Lower leg skin (tissue), 4 donors: ENCODE measurements at regions of chr10 and their contacts with region 1.

Region 1: DNA sequence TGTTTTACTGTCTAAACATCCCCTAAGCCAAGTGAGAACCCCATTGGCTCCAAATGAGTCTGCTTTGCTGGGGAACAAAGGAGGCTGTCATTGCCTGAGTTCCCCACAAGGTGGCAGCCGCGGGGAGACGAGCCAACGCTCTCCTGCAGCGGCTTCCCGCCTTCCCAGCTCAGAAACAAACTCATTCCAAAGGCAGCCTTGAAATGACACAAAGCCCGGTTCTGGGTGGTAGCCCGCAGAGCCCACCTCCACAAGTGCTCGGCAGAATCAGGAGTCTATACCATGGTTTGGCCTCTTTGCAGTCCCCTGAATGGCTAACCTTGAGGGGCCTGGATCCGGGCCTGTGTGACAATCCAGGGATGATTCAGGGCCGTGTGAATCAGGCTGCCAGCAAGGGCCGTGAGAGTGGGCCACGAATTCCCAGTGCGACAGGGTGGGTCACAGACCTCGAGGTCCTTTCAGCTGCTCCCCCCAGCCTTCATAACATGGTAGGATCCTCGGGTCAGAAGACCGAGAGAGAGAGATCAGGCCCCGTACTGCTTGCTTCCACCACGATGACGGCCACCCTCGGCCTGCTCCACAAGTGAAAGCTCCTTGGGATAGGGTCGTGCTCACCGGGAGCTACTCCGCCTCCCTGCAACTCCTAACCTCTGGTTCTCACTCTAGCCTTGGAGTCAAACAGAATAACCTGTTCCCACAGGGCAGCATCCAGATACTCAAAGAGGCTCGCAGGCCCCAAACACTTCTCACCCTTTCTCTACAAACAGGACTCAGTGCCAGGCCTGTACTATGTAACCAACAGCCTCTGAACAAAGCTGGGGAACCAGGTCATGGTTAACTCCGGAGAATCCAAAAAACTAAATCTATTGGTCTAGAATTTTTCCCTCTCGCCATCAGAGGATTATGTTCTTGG is 79.6 kb downstream of the DLG5 start:
- DNase-seq: peak; percentile 72 to 94
- H3K4me3 ChIP-seq: no peak overlapping the region
- CTCF ChIP-seq: peak in 1 of 3 donors; percentile 78
- POLR2A ChIP-seq: no peak

Region 2: DNA sequence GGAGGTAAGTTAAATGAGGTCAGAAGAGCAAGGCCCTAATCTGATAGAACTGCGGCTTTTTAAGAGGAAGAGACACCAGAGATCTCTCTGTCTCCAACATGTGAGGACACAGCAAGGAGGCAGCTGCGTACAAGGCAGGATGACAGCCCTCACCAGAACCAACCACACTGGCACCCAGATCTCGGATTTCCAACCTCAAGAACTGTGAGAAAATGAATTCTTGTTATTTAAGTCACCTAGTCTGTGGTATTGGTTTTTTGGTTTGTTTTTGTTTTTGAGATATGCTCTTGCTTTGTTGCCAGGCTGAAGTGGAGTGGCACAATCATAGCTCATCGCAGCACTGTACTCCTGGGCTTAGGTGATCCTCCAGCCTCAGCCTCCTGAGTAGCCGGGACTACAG is 47.6 kb before region 1 on chr10:
- intact Hi-C with region 1: no loop called
- DNase-seq: no peak
- H3K4me3 ChIP-seq: no peak overlapping the region
- CTCF ChIP-seq: no peak
- POLR2A ChIP-seq: no peak

Region 3: DNA sequence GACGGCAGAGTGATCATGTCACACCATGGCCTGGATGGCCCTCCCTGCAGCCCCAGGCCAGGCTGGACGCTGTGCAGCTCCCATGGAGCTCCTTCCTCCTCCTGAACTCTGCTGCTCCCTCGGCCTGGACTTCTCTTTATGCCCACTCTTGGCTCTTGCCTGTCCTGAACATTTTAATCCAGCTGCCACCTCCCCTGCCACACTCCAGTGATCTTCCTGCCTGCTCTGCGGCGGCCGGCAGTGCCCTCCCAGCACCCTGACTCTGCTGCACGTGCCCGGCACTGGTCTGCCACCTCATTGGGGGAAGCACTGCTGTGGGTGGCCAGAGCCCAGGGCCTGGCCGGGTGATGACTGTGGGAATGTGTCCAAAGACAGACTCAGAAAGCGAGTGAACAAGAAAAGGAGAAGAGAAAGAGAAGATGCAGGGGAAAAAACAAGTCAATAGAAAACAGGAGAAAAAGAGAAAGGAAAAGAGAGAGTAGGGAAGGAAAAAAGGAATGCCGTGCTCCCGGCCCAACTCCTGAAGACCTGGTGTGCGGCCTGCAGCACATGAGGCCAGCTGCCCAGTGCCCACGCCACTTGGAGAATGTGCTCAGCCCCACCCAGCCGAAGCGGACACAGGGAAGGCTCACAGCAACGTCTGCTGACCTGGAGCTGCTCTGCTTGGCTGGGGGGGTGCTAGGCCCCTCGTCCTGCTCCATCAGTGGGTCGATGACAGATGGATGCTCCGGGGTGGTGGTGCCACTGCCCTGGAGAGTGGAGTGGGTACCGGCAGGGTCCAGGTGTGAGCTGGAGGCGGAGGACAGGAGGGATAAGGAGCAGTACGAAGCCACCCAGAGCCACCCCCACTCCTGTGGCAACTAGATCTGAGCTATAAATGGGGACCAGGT is 36.3 kb before region 1 on chr10:
- intact Hi-C with region 1: no loop called
- DNase-seq: no peak
- H3K4me3 ChIP-seq: no peak overlapping the region
- CTCF ChIP-seq: no peak
- POLR2A ChIP-seq: no peak

Region 4: DNA sequence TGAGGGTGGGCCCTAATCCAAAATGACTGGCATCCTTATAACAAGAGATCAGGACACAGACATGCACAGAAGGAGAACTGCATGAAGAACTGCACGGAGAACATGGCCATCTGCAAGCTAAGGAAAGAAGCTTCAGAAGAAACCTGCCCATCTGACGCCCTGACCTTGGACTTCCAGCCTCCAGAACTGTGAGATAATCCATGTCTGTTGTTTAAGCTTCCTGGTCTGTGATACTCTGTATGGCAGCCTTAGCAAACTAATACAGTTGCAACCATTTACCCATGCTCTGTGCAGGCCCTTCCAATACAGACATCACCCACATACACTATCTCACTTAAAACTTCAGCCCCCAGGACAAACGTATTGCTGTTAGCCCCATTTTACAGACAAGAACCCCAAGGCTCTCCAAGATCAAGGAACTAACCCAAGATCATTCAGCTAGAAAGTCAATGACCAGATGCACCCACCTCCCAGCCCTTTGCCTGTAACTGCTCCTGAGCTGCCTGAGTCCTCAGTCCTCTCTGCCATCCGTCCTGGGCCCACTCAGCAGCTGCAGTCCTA is 39.9 kb after region 1 on chr10:
- intact Hi-C with region 1: loop called (anchors 1 kb)
- DNase-seq: no peak
- H3K4me3 ChIP-seq: no peak overlapping the region
- CTCF ChIP-seq: no peak
- POLR2A ChIP-seq: no peak

Region 5: GRCh38 chr10:77965294-77965693 is 118.3 kb after region 1 on chr10:
- intact Hi-C with region 1: loop called (anchors 10 kb)
- DNase-seq: no peak
- H3K4me3 ChIP-seq: no peak overlapping the region
- CTCF ChIP-seq: no peak
- POLR2A ChIP-seq: no peak

Region 6: GRCh38 chr10:78029269-78030226 is 182.6 kb after region 1 on chr10 and contains the start of gene POLR3A:
- intact Hi-C with region 1: loop called (anchors 2 kb)
- DNase-seq: peak; percentile 94 to 99
- H3K4me3 ChIP-seq: peak within 1 kb of the TSS; percentile 98
- CTCF ChIP-seq: peak in 1 of 3 donors; percentile 69
- POLR2A ChIP-seq: no peak
- total RNA-seq, gene POLR3A: 8.7 to 11.1 (median 10.9) TPM